Activated CD8-positive, alpha-beta T cell treated with anti-CD3 and anti-CD28 coated beads for 36 hours (primary cell): ENCODE measurements at regions of chr5 and their contacts with region 1.

Region 1: GRCh38 chr5:58460732-58461286 is 923 bp upstream of the PLK2 start:
- DNase-seq: peak; percentile 92
- ATAC-seq: peak; percentile 79
- H3K4me3 Mint-ChIP-seq: peak overlapping the region; percentile 71
- H3K27ac Mint-ChIP-seq: peak overlapping the region; percentile 26
- H3K4me1 Mint-ChIP-seq: peaks cover 10% of the 10 kb centered on the region
- H3K27me3 Mint-ChIP-seq: peaks cover 10% of the 10 kb centered on the region
- CTCF ChIP-seq: peak; percentile 79

Region 2: GRCh38 chr5:57298295-57298984 is 1162.4 kb before region 1 on chr5:
- CTCF ChIA-PET with region 1: interaction called, 51 read pairs
- POLR2A ChIA-PET with region 1: no interaction called
- intact Hi-C with region 1: loop called (anchors 2 kb)
- DNase-seq: peak; percentile 91
- ATAC-seq: peak; percentile 61
- H3K4me3 Mint-ChIP-seq: peak overlapping the region; percentile 20
- H3K27ac Mint-ChIP-seq: peak overlapping the region; percentile 9
- H3K4me1 Mint-ChIP-seq: peaks cover 36% of the 10 kb centered on the region
- H3K27me3 Mint-ChIP-seq: no peaks in the 10 kb centered on the region
- CTCF ChIP-seq: peak; percentile 64

Region 3: DNA sequence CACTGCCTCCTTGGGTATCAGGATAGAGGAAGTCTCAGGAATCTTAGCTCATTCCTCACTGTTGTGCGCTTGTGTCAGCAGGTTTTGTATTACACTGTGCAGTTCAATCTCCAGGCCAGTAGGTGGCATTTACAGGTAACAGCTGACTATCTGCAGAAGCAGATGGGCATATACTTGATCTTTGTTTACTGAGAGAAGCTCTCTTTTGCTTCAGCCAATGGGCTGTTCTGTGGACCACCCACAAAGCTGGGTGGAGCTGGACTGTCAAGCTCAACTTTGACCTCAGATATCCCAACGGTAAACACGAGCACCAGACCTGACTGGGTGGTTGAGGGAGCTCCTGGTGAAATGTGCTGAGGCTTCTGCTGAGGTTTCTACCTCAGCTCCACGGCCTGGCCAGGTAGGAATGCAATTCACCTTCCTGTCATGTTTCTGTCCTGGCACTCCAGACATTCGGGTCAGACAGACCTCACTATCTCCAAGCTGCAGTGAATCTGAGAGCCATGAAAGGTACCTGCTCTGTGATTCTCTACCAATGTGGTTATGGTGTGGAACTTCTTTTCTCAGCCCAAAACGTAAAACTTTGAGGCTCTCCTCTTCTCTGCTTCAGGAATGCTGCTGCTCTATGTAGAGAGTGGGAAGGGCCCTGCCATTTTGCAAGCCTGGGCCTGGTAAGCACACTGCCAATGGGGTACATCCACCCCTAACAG is 810.3 kb before region 1 on chr5:
- CTCF ChIA-PET with region 1: interaction called, 16 read pairs
- POLR2A ChIA-PET with region 1: no interaction called
- intact Hi-C with region 1: loop called (anchors 5 kb)
- DNase-seq: peak; percentile 21
- ATAC-seq: peak; percentile 67
- H3K4me3 Mint-ChIP-seq: no peak overlapping the region
- H3K27ac Mint-ChIP-seq: no peak overlapping the region
- H3K4me1 Mint-ChIP-seq: no peaks in the 10 kb centered on the region
- H3K27me3 Mint-ChIP-seq: peaks cover 5% of the 10 kb centered on the region
- CTCF ChIP-seq: peak; percentile 59

Region 4: GRCh38 chr5:57779383-57780223 is 681.2 kb before region 1 on chr5:
- CTCF ChIA-PET with region 1: interaction called, 40 read pairs
- POLR2A ChIA-PET with region 1: no interaction called
- intact Hi-C with region 1: loop called (anchors 2 kb)
- DNase-seq: peak; percentile 37
- ATAC-seq: peak; percentile 34
- H3K4me3 Mint-ChIP-seq: no peak overlapping the region
- H3K27ac Mint-ChIP-seq: no peak overlapping the region
- H3K4me1 Mint-ChIP-seq: no peaks in the 10 kb centered on the region
- H3K27me3 Mint-ChIP-seq: no peaks in the 10 kb centered on the region
- CTCF ChIP-seq: peak; percentile 63